ENCODE measurements at regions of chr12 and their contacts with region 1.

Region 1: GRCh38 chr12:22443379-22444316 is 100.7 kb downstream of the C2CD5 start:
- DNase-seq: peak; percentile 40
- H3K4me3 Mint-ChIP-seq: no peak overlapping the region
- H3K27ac Mint-ChIP-seq: no peak overlapping the region
- H3K4me1 Mint-ChIP-seq: peaks cover 6% of the 10 kb centered on the region
- H3K27me3 Mint-ChIP-seq: peaks cover 16% of the 10 kb centered on the region

Region 2: DNA sequence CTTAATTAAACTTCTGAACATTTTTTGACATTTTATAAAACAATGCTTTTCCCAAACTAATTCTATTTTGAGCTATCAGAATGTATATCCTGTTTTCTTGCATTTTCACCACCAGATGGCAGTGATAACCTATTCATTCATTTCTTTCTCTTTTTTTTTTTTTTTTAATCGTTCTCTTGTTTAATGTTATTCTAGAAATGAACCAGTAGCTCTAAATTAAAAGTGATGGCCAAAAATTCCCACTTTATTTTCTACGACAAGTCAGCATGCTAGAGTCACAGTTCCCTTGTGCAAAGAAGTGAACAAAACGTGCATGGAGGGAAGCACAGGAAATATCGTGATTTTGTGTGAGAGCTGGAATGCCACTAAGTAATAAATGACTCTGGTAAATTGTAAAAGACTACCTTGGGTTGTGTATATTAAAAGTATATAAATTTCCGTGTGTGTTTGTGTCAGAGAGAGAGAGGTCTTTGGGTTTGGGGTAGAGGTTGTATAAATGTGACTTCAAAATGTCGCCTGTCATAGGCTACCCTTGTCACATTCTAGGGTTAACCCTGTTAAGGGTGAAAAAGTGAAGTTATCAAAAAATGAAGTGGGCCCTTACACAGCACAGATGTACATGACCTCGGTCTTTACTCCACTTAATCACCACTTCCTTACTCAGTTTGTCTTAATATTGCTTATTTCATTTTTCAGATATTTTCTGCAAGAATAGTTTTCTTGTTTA is 745.6 kb before region 1 on chr12:
- intact Hi-C with region 1: loop called (anchors 5 kb)
- DNase-seq: no peak
- H3K4me3 Mint-ChIP-seq: no peak overlapping the region
- H3K27ac Mint-ChIP-seq: no peak overlapping the region
- H3K4me1 Mint-ChIP-seq: peaks cover 6% of the 10 kb centered on the region
- H3K27me3 Mint-ChIP-seq: peaks cover 5% of the 10 kb centered on the region

Region 3: DNA sequence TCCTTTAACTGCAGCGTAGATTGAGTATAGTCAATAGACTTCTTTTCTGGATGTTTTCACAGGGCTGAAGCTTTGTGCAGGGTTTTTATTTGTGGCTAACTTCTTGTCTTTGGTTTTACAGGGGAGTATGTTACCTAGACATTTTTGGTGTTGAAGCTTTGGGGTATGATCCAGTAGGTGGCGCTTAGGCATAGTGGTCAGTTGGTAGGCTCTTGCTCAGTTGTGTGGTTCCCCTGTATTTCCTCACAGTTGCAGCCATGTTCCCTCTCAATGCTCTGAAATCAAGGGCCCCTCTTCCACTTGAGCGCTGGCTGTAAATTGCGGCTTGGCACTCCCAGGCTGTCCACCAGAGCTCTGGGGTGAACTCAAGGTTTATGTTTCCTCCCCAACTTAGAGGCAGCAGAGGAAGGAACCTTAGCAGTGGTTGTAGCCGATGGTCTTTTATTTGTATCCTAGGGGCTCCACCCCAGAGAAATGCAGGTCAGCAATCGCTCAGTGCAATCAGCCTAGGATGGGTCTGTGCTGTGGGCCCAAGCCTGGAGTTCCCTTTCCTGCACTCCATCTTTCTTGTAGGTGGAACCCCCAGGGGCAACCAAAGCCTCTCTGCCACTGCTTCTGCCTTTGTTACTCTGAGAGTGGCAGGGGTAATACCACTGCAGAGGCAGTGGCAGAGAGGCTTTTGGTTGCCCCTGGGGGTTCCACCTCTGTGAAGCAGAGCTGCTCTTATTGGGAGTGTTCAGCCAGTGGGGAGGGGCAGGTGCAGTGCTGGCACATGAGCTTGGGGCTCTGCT is 342.5 kb before region 1 on chr12:
- intact Hi-C with region 1: loop called (anchors 1 kb)
- DNase-seq: no peak
- H3K4me3 Mint-ChIP-seq: no peak overlapping the region
- H3K27ac Mint-ChIP-seq: no peak overlapping the region
- H3K4me1 Mint-ChIP-seq: peaks cover 2% of the 10 kb centered on the region
- H3K27me3 Mint-ChIP-seq: peaks cover 9% of the 10 kb centered on the region

Region 4: GRCh38 chr12:22409377-22410164 is 34.1 kb before region 1 on chr12:
- intact Hi-C with region 1: loop called (anchors 5 kb)
- DNase-seq: peak; percentile 18
- H3K4me3 Mint-ChIP-seq: no peak overlapping the region
- H3K27ac Mint-ChIP-seq: no peak overlapping the region
- H3K4me1 Mint-ChIP-seq: peaks cover 13% of the 10 kb centered on the region
- H3K27me3 Mint-ChIP-seq: no peaks in the 10 kb centered on the region

Region 5: DNA sequence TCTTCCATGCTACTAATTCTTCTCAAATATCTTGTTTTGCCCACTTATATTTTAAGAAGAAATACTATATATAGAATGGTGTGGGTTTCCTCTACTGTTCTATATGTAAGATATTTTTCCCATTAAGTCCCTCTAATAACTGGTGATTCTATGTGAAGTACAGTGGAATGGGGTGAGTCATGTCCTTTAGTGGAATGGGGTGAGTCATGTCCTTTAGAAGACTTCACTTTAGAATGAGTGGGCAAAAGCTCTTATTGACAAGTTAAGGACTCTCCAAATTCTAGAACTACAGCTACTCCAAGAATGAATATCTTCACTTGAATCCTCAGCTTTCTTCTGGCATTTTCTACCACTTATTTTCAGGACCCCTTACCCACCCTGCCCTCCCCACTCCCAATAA is 531.2 kb after region 1 on chr12:
- intact Hi-C with region 1: no loop called
- DNase-seq: no peak
- H3K4me3 Mint-ChIP-seq: no peak overlapping the region
- H3K27ac Mint-ChIP-seq: no peak overlapping the region
- H3K4me1 Mint-ChIP-seq: no peaks in the 10 kb centered on the region
- H3K27me3 Mint-ChIP-seq: no peaks in the 10 kb centered on the region

Measured in activated T-helper 2 cell treated with anti-CD3 and anti-CD28 coated beads, Interferon-gamma antibody, Interleukin-2, Interleukin-4, amounts not matched to agents 10 μg/mL and 5 μg/mL and 100 μg/mL, durations not matched to agents 14 hours and 24 hours and 36 hours (primary cell).